GM12878 (cell line): ENCODE measurements at regions of chr22 and their contacts with region 1.

Region 1: DNA sequence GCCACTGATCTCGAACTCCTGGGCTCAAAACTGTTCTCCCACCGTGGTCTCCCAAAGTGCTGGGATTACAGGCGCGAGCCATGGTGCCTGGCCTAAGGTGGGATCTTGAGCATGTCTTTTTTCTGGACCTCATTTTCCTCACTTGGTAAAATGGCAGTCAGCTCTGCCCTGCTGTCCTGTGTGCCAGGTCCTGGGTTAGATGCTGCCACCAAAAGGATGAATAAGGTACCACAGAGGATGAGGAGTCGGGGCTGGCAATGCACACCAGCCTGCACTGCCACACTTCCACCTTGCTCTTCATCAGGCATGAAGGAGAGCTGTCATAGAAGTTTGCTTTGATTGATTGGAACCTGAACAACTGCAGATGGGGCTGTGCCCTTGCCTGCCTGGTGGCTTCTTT is 32.3 kb downstream of the ACO2 start:
- DNase-seq: peak; percentile 27
- ATAC-seq: peak; percentile 93
- H3K4me3 ChIP-seq: no peak overlapping the region
- H3K27ac ChIP-seq: no peak overlapping the region
- H3K4me1 ChIP-seq: no peaks in the 10 kb centered on the region
- H3K27me3 ChIP-seq: no peaks in the 10 kb centered on the region
- CTCF ChIP-seq: peak; percentile 46 to 71 (median 52); a peak in 5 of 6 replicates
- EP300 ChIP-seq: no peak
- POLR2A ChIP-seq: no peak
- RAD21 ChIP-seq: peak; percentile 67

Region 2: GRCh38 chr22:41078931-41079330 is 422.3 kb before region 1 on chr22:
- CTCF ChIA-PET with region 1: no interaction called
- POLR2A ChIA-PET with region 1: no interaction called
- RAD21 ChIA-PET with region 1: no interaction called
- SMC1A ChIA-PET with region 1: no interaction called
- in situ Hi-C with region 1: no loop called
- intact Hi-C with region 1: no loop called
- DNase-seq: no peak
- ATAC-seq: peak; percentile 57; the same call in 2 of the 3 replicates
- H3K4me3 ChIP-seq: no peak overlapping the region
- H3K27ac ChIP-seq: no peak overlapping the region
- H3K4me1 ChIP-seq: no peaks in the 10 kb centered on the region
- H3K27me3 ChIP-seq: no peaks in the 10 kb centered on the region
- CTCF ChIP-seq: no peak
- EP300 ChIP-seq: no peak
- POLR2A ChIP-seq: no peak
- RAD21 ChIP-seq: no peak

Region 3: GRCh38 chr22:41468381-41469217 is 32.6 kb before region 1 on chr22 and contains the starts of genes ACO2 and PHF5A:
- CTCF ChIA-PET with region 1: interaction called, 15 read pairs
- POLR2A ChIA-PET with region 1: interaction called, 6 read pairs
- RAD21 ChIA-PET with region 1: interaction called, 8 read pairs
- SMC1A ChIA-PET with region 1: interaction called, 8 read pairs
- in situ Hi-C with region 1: no loop called
- intact Hi-C with region 1: loop called (anchors 5 kb)
- DNase-seq: peak; percentile 98
- ATAC-seq: peak; percentile 95
- H3K4me3 ChIP-seq: peak within 1 kb of the TSS; percentile 80
- H3K27ac ChIP-seq: peak within 1 kb of the TSS; percentile 97
- H3K4me1 ChIP-seq: peaks cover 14% of the 10 kb centered on the region
- H3K27me3 ChIP-seq: no peaks in the 10 kb centered on the region
- CTCF ChIP-seq: no peak
- EP300 ChIP-seq: peak in 1 of 2 experiments; percentile 32; a peak in 1 of 4 replicates
- POLR2A ChIP-seq: peak; percentile 81
- RAD21 ChIP-seq: no peak
- polyA plus RNA-seq, gene ACO2: 21.4 to 22.3 TPM
- polyA plus RNA-seq, gene PHF5A: 40.5 to 77.0 TPM

Region 4: DNA sequence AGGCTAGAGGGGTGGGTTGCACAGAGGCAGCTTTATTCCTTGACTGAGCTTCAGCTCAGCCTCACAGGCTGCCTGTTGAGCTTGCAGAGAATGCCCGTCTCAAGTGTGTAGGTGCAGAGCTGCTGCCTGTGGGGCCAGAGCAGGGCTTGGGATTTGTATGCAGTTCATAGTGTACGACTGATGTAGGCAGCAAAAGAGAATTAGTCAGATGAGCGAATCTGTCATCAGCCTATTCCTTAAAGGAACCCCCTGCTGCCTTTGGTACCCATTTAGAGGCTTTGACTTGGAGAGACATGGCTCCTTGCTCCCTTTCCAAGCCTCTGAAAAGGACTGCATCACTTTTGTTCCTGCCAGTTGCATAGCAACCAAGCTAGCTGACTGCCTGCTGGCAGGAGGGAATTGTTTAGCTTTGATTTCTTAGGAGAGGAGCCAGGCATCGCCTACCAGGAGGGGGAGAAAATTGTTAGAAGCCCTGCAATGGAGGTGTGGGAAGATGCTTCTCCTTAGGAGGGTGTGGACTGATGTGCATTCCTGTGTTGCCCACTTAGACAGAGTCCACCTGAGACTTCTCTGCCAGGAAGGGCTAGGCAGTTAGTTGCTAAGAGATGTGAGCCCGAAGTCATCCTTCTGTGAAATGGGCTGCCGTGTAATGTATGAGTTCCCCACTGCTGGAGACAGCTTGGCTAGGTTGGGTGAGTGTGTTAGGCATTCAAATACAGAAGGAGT is 21.4 kb before region 1 on chr22:
- CTCF ChIA-PET with region 1: interaction called, 6 read pairs
- POLR2A ChIA-PET with region 1: interaction called, 6 read pairs
- RAD21 ChIA-PET with region 1: interaction called, 15 read pairs
- SMC1A ChIA-PET with region 1: interaction called, 13 read pairs
- in situ Hi-C with region 1: no loop called
- intact Hi-C with region 1: no loop called
- DNase-seq: no peak
- ATAC-seq: no peak; the same call in 2 of the 3 replicates
- H3K4me3 ChIP-seq: no peak overlapping the region
- H3K27ac ChIP-seq: peak overlapping the region; percentile 52
- H3K4me1 ChIP-seq: peaks cover 60% of the 10 kb centered on the region
- H3K27me3 ChIP-seq: no peaks in the 10 kb centered on the region
- CTCF ChIP-seq: no peak
- EP300 ChIP-seq: no peak
- POLR2A ChIP-seq: no peak
- RAD21 ChIP-seq: no peak

Region 5: DNA sequence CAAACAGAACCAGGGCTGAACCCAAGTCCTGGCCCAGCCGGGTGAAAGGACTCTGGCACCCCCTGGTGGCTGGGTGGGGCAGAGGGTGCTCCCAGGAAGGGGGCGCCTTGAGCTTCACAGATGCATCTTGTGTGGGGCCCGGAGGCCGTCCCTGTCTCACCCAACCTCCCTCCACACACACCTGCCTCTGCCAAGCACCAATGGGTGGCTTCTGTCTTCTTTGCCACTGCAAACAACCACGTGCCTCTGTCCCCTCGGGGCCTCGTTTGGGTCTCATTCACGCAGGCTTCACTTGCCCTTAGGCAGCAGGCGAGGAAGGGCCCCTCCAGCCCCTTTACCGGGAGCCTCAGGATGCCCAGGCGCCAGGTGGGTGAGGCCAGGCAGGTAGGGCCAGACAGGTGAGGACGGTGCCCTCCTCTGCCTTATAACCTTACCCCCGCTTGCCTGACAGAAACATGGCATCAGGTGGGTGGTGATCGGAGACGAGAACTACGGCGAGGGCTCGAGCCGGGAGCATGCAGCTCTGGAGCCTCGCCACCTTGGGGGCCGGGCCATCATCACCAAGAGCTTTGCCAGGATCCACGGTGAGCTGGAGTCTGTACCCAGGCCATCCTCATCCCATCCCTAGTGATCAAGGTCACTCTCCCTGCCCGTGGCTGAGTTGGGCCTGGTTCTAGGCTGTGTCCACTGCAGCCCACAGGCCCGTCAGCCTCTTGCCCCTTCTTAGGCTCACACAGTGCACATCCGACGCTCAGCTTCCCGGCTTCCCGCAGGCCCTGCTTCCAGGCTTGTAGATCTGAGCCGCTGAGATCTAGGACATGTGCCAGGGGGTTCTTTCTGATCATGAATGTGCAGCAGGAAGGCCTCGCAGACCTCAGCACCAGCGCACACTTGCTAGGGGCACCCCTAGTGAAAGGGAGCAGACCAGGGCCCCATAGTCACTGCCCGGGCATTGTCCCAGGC is 25.9 kb after region 1 on chr22:
- CTCF ChIA-PET with region 1: no interaction called
- POLR2A ChIA-PET with region 1: no interaction called
- RAD21 ChIA-PET with region 1: no interaction called
- SMC1A ChIA-PET with region 1: no interaction called
- in situ Hi-C with region 1: no loop called
- intact Hi-C with region 1: no loop called
- DNase-seq: no peak
- ATAC-seq: peak; percentile 81
- H3K4me3 ChIP-seq: no peak overlapping the region
- H3K27ac ChIP-seq: no peak overlapping the region
- H3K4me1 ChIP-seq: no peaks in the 10 kb centered on the region
- H3K27me3 ChIP-seq: no peaks in the 10 kb centered on the region
- CTCF ChIP-seq: peak; percentile 79 to 93 (median 79)
- EP300 ChIP-seq: no peak
- POLR2A ChIP-seq: peak; percentile 52; the same call in 1 of the 2 replicates
- RAD21 ChIP-seq: peak; percentile 70